ENCODE measurements at regions of chr1 and their contacts with region 1.

Region 1: DNA sequence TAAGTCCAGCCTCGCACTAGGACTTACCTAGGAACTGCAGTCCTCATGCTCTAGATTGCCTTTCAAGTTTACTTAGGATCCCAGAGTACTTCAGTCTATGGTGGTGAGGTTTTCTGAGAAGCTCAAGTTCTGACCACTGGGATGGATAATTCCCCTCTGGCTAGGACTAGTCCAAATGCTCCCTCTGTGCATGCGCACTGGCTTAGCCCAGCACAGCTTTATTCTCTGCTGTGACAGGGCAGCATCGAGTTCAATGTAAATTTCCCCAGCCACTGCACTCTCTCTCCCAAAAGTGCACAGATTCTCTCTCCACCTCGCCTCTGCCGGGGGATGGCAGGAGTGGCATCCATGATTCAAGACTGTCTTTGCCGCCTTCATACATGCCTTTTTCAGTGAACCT is 241.6 kb downstream of the ZNF326 start:
- DNase-seq: no peak
- ATAC-seq: no peak
- H3K4me3 ChIP-seq: no peak overlapping the region
- H3K27ac ChIP-seq: no peak overlapping the region
- H3K4me1 ChIP-seq: no peaks in the 10 kb centered on the region
- H3K27me3 ChIP-seq: no peaks in the 10 kb centered on the region
- CTCF ChIP-seq: no peak
- POLR2A ChIP-seq: no peak

Region 2: DNA sequence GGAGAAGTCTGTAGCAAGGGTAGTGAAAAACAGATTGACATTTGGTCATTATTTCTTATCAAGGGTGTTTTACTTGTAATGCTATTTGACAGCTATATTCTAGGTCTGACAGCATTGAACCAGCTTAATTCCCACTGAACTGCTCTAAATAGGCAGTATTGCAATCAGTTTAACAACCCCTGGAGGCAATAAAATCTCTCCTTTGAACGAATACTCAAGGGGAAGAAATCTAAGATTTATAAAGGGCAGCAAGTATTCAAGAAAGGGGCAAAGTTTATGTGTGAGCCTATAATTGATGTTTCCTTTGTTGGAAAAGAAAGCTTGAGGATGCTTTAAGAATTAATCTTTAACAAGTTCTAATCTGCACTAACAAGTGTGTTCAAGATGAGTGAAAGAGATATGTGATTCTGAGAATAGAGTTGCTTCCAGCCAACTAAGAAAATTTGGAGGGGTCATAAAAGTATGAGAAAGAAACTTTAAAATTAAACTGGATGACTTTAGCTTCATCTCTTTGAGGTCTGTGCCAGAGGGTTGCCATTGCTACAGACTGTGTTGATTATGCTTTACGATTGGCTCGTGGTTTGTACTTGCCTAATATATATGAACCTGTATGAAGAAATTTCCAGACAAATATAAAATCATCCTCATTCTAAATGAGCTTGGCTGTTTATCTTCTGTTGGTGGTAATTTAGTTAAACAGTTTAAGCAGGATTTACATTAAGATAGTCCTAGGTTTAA is 169.1 kb before region 1 on chr1:
- intact Hi-C with region 1: no loop called
- DNase-seq: no peak
- ATAC-seq: no peak
- H3K4me3 ChIP-seq: no peak overlapping the region
- H3K27ac ChIP-seq: no peak overlapping the region
- H3K4me1 ChIP-seq: no peaks in the 10 kb centered on the region
- H3K27me3 ChIP-seq: peaks cover 0 to 4% (median 0%) of the 10 kb centered on the region in 9 donors
- CTCF ChIP-seq: no peak
- POLR2A ChIP-seq: no peak

Region 3: DNA sequence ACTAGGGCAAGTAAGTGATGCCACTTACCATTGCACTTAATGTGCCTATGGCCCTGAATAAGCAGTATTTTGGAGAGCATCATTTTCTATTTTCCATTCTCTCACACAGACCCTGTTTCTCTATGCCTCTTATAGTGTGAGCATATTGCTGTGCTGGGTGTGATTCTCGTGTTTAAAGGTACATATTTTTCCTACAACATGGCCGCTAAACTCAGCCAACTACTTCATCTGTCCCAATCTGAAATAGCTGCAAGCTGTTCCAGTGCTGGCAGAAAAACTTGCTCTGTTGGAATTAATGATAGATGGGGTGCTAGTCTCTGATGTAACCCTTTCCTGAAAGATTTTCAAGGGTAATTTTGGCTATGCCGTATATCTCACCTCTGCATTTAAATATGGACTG is 144.1 kb before region 1 on chr1:
- intact Hi-C with region 1: no loop called
- DNase-seq: no peak
- ATAC-seq: no peak
- H3K4me3 ChIP-seq: no peak overlapping the region
- H3K27ac ChIP-seq: no peak overlapping the region
- H3K4me1 ChIP-seq: no peaks in the 10 kb centered on the region
- H3K27me3 ChIP-seq: peaks cover 0 to 8% (median 2%) of the 10 kb centered on the region in 9 donors
- CTCF ChIP-seq: no peak
- POLR2A ChIP-seq: no peak

Region 4: GRCh38 chr1:90187323-90187585 is 49.2 kb before region 1 on chr1:
- intact Hi-C with region 1: loop called in 1 of 10 experiments (anchors 10 kb)
- DNase-seq: no peak
- ATAC-seq: no peak
- H3K4me3 ChIP-seq: no peak overlapping the region
- H3K27ac ChIP-seq: no peak overlapping the region
- H3K4me1 ChIP-seq: peaks cover 0 to 5% (median 0%) of the 10 kb centered on the region in 12 donors
- H3K27me3 ChIP-seq: no peaks in the 10 kb centered on the region
- CTCF ChIP-seq: no peak
- POLR2A ChIP-seq: no peak